ENCODE measurements at regions of chr4 and their contacts with region 1.

Region 1: GRCh38 chr4:10018818-10019461 is 2.4 kb downstream of the SLC2A9 start:
- DNase-seq: peak; percentile 82 to 96 (median 91)

Region 2: DNA sequence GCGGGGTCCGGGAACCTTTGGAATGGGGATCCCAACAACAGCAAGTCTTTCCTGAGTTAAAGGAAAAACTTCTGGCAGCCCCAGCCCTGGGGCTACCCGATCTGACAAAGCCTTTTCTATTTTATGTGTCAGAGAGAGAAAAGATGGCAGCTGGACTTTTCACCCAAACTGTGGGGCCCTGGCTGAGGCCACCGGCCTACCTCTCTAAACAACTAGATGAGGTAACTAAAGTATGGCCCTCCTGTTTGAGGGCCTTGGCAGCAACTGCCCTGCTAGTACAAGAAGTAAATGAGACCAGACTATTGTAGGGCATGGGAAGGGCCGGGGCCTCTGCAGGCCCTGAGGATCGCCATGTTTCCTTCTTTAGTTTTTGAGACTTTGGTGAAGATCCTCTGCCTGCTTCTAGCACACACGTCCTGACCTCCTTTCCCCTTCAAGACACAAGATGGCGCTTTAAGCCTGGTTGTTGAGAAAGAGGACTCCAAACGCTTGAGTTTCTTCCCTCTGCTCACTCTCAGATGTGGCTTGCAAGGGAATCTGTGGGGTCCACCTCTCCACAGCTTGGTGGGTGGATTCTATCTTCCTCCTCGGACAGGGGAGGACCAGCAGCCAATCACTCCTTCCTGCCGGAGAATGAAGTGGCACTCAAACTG is 256.0 kb before region 1 on chr4:
- intact Hi-C with region 1: loop called (anchors 5 kb)
- DNase-seq: peak in 40 of 42 donors; percentile 37 to 87 (median 70)

Region 3: DNA sequence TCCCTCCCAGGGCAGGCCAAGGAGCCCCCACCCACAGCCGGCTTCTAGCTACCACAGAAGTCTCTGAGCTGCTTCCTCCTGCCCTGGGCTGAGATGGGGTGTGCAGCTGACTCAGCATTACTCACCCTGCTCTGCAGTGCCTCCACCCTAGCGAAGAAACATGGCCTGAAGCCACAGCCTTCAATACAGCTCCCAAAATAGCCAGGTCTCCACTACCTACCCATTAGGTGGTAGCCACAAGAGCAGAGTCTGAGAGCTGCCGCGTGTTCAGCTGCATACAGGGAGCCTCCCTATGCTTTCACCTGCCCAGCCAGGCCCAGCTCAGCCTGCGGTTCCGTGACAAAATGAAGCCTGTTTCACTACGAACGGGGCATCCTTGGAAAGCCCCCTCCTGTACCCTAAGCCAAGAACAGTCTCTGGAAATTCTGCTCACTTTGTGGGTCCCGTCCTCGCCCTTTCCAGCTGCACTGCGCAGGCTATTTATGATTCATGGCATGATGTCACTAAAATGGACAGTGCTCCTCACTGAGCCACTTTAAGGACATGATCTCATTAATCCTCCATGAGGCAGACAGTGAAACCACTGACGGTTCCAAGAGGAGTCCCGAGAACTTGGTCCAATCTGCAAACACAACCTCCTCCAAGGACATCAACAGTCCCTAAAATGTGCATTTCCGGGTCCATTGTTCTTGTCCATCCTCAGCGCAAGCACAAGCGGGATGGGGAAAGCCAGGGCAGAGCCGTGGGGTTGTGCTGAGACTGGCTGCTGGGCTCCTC is 77.4 kb after region 1 on chr4:
- intact Hi-C with region 1: no loop called
- DNase-seq: peak in 32 of 42 donors; percentile 35 to 83 (median 63)

Region 4: DNA sequence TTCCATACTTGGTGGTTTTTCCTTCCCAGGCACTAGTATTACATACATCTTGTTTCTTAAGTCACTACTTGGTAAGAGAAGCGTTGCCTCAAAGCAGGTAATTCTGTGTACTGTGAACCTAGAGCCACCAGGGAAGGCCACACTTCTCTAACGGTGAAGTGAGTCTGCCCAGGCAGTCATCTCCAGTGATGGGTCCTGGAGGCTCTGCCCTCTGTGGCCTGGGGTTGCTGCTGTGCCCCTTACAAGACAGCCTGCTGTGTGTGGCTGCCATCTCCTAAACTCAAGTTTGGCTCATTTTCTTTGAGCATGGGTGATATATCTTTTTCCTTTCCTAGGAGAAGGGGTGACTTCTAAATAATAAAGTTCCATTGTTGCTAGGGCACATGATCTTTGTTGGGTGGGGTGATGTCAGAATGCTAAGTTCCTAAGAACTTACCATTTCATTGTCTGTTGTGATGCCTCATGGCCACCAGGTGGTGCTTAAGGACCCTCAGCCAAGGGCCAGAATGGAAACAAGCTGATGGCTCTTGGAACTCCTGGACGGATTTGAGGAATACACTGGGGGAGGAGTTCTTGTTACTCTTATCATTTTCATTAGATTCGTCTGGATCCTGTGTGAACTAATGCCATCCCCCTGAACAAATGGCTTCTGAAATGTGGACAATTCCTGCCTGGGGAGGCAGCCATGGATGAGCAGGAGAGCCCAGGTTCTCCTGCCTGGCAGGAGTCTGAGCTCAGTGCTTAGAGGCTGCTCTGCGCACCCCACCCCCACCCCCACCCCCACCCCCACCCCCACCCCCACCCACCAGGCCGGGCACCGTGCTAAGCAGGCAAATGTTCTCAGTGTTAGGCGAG is 138.8 kb after region 1 on chr4:
- intact Hi-C with region 1: no loop called
- DNase-seq: peak; percentile 13 to 84 (median 62)

Measured in head of caudate nucleus (tissue), 42 donors.